ENCODE measurements at regions of chr1 and their contacts with region 1.

Region 1: DNA sequence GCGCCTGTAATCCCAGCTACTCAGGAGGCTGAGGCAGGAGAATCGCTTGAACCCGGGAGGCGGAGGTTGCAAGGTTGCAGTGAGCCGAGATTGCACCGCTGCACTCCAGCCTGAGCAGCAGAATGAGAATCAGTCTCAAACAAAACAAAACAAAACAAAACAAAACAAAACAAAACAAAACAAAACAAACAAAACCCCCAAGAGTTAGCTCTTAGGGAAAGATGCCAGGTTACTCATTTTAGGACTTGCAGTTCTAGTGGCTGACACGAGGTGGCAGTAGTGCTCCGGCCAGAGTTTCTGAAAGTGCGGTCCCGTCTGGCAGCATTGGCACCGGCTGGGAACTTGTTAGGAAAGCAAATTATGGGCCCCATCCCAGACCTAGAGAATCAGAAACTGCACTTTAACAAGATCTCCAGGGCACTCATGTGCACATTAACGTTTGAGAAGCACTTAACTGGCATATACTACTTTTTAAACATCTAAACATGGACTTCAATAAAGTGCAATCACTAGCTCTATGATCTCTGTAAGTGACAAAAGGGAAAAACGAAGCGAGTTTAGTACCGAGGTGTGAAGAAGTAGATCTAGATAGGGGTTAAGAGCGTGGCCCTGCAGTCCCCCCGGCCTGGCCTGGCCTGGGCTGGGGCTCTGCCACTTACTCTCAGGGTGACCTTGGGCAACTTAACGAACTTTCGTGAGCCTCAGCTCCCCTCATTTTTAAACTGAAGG is 41.9 kb upstream of the TNFRSF1B start:
- DNase-seq: peak; percentile 60 to 88 (median 76)
- ATAC-seq: peak; percentile 75
- H3K4me3 ChIP-seq: no peak overlapping the region
- H3K4me3 Mint-ChIP-seq: peak overlapping the region; percentile 71
- H3K27ac ChIP-seq: no peak overlapping the region
- H3K27ac Mint-ChIP-seq: peak overlapping the region; percentile 24
- H3K4me1 ChIP-seq: peaks cover 50% of the 10 kb centered on the region
- H3K4me1 Mint-ChIP-seq: peaks cover 45% of the 10 kb centered on the region
- H3K27me3 ChIP-seq: no peaks in the 10 kb centered on the region
- H3K27me3 Mint-ChIP-seq: no peaks in the 10 kb centered on the region
- CTCF ChIP-seq: peak; percentile 97

Region 2: DNA sequence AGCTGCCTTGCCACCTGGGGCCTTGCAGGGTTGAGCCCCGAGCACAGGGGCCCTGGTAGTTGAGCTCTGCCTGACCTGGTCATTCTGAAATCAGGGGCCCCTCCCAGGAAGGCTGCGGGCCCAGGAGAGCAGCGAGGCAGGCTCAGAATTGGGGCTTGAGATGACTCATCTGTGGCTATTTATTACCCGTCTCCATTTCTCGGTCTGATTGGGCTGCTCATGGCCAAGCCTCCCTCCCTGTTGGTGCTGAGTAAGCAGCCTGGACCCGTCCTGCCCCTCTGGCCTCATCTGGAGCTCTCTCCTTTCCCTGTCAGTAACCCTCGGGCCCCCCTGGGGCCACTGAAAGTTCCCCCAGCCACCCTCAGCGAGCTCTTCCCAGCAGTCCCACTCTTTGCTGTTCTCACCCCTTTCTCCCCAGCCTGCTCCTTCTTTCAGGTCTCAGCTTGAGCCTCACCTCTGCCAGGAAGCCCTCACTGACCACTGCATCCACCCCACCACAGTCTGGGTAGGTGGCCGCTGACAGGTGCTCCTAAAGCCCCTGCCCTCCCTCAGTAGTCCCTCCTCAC is 72.8 kb before region 1 on chr1:
- CTCF ChIA-PET with region 1: no interaction called
- POLR2A ChIA-PET with region 1: no interaction called
- intact Hi-C with region 1: no loop called
- DNase-seq: peak in 4 of 14 experiments; percentile 17 to 50 (median 30)
- ATAC-seq: no peak
- H3K4me3 ChIP-seq: no peak overlapping the region
- H3K4me3 Mint-ChIP-seq: no peak overlapping the region
- H3K27ac ChIP-seq: no peak overlapping the region
- H3K27ac Mint-ChIP-seq: no peak overlapping the region
- H3K4me1 ChIP-seq: peaks cover 17% of the 10 kb centered on the region
- H3K4me1 Mint-ChIP-seq: no peaks in the 10 kb centered on the region
- H3K27me3 ChIP-seq: no peaks in the 10 kb centered on the region
- H3K27me3 Mint-ChIP-seq: no peaks in the 10 kb centered on the region
- CTCF ChIP-seq: no peak

Region 3: DNA sequence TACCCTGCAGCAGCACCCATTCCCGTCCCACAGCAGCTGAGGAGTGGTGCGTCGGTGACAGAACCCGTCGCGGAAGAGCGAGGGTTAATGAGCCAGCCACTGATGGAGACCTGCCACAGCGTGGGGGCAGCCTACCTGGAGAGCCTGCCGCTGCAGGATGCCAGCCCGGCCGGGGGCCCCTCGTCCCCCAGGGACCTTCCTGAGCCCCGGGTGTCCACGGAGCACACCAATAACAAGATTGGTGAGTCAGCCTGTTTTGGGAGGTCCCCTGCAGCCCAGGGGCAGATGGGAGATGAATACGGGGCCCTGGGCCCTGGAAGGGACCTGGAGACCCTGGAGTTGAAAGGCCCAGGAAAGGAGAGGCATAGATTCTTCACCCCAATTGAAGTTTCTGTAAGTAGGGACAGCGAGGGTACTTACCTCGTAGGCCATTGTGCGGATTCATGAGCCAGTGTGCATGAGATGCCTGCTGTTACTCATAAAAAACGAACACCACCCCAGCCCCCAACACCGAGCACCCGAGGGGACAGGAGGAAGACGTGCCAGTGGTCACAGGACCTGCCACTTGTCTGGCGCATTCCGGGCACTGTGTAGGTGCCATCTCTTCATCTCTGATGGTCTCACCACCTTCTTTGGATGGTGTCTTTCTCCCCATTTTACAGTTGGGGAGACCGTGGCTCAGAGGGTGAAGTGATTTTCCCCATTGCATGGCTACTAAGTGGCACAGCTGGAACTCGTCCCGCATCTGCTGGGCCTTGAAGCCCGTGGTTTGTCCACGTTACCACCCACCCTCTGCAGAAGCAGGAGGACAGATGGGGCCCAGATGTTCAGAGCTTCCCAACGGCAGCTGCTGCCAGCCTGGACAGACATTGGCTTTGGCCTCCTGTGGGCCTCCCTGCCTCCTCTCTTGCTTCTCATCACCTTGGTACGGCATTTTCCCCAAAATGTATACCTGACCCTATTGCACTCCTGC is 13.6 kb after region 1 on chr1:
- CTCF ChIA-PET with region 1: interaction called, 10 read pairs
- POLR2A ChIA-PET with region 1: interaction called, 3 read pairs
- intact Hi-C with region 1: no loop called
- DNase-seq: no peak
- ATAC-seq: no peak
- H3K4me3 ChIP-seq: no peak overlapping the region
- H3K4me3 Mint-ChIP-seq: no peak overlapping the region
- H3K27ac ChIP-seq: no peak overlapping the region
- H3K27ac Mint-ChIP-seq: no peak overlapping the region
- H3K4me1 ChIP-seq: peaks cover 34% of the 10 kb centered on the region
- H3K4me1 Mint-ChIP-seq: peaks cover 16% of the 10 kb centered on the region
- H3K27me3 ChIP-seq: no peaks in the 10 kb centered on the region
- H3K27me3 Mint-ChIP-seq: no peaks in the 10 kb centered on the region
- CTCF ChIP-seq: no peak

Region 4: GRCh38 chr1:12161662-12162458 is 37.0 kb after region 1 on chr1:
- CTCF ChIA-PET with region 1: interaction called, 16 read pairs
- POLR2A ChIA-PET with region 1: interaction called, 6 read pairs
- intact Hi-C with region 1: no loop called
- DNase-seq: peak; percentile 43 to 93 (median 64)
- ATAC-seq: peak; percentile 75
- H3K4me3 ChIP-seq: no peak overlapping the region
- H3K4me3 Mint-ChIP-seq: peak overlapping the region; percentile 59
- H3K27ac ChIP-seq: peak overlapping the region; percentile 47 to 73
- H3K27ac Mint-ChIP-seq: peak overlapping the region; percentile 83
- H3K4me1 ChIP-seq: peaks cover 94% of the 10 kb centered on the region
- H3K4me1 Mint-ChIP-seq: peaks cover 69% of the 10 kb centered on the region
- H3K27me3 ChIP-seq: no peaks in the 10 kb centered on the region
- H3K27me3 Mint-ChIP-seq: no peaks in the 10 kb centered on the region
- CTCF ChIP-seq: no peak

Region 5: GRCh38 chr1:12177999-12178441 is 53.2 kb after region 1 on chr1:
- CTCF ChIA-PET with region 1: interaction called, 67 read pairs
- POLR2A ChIA-PET with region 1: interaction called, 26 read pairs
- intact Hi-C with region 1: no loop called
- DNase-seq: peak; percentile 77 to 99 (median 94)
- ATAC-seq: peak; percentile 70
- H3K4me3 ChIP-seq: peak overlapping the region; percentile 41
- H3K4me3 Mint-ChIP-seq: peak overlapping the region; percentile 69
- H3K27ac ChIP-seq: peak overlapping the region; percentile 83 to 85
- H3K27ac Mint-ChIP-seq: peak overlapping the region; percentile 96
- H3K4me1 ChIP-seq: peaks cover 100% of the 10 kb centered on the region
- H3K4me1 Mint-ChIP-seq: peaks cover 77% of the 10 kb centered on the region
- H3K27me3 ChIP-seq: no peaks in the 10 kb centered on the region
- H3K27me3 Mint-ChIP-seq: no peaks in the 10 kb centered on the region
- CTCF ChIP-seq: no peak

Region 6: DNA sequence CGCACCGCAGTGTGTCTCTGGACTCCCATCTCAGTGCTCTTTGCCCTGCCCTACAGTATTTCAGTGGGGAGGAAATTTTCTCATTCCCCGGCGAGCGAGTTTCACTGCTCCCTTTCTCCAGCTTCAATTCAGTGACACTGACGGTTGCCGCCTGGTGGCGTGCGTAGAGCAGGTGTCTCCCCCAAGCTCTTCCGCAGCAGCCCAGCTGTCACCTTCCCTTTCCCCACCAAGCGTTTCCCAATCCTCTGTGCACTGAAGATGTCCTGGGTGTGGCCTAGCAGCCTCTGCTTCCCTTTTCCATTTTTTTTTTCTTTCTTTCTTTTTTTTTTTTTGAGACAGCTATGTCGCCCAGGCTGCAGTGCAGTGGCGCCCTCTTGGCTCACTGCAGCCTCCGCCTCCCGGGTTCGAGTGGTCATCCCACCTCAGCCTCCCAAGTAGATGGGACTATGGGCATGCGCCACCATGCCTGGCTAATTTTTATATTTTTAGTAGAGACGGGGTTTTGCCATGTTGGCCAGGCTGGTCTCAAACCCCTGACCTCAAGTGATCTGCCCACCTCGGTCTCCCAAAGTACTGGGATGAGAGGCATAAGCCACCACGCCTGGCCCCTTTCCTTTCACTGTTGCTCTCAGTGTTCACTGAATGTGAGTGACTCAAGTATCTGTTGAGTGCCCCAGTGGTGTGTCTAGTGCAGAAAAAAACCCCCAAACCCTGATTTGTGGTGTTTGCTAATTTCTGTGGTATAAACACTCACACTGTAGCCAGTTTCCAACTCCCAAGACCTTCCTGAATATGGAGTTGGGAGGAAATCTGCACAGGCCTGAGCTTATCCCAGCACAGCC is 72.0 kb after region 1 on chr1:
- CTCF ChIA-PET with region 1: interaction called, 42 read pairs
- POLR2A ChIA-PET with region 1: interaction called, 5 read pairs
- intact Hi-C with region 1: no loop called
- DNase-seq: peak in 2 of 14 experiments; percentile 63 to 69
- ATAC-seq: no peak
- H3K4me3 ChIP-seq: no peak overlapping the region
- H3K4me3 Mint-ChIP-seq: no peak overlapping the region
- H3K27ac ChIP-seq: no peak overlapping the region
- H3K27ac Mint-ChIP-seq: no peak overlapping the region
- H3K4me1 ChIP-seq: peaks cover 44% of the 10 kb centered on the region
- H3K4me1 Mint-ChIP-seq: no peaks in the 10 kb centered on the region
- H3K27me3 ChIP-seq: no peaks in the 10 kb centered on the region
- H3K27me3 Mint-ChIP-seq: no peaks in the 10 kb centered on the region
- CTCF ChIP-seq: no peak

Region 7: DNA sequence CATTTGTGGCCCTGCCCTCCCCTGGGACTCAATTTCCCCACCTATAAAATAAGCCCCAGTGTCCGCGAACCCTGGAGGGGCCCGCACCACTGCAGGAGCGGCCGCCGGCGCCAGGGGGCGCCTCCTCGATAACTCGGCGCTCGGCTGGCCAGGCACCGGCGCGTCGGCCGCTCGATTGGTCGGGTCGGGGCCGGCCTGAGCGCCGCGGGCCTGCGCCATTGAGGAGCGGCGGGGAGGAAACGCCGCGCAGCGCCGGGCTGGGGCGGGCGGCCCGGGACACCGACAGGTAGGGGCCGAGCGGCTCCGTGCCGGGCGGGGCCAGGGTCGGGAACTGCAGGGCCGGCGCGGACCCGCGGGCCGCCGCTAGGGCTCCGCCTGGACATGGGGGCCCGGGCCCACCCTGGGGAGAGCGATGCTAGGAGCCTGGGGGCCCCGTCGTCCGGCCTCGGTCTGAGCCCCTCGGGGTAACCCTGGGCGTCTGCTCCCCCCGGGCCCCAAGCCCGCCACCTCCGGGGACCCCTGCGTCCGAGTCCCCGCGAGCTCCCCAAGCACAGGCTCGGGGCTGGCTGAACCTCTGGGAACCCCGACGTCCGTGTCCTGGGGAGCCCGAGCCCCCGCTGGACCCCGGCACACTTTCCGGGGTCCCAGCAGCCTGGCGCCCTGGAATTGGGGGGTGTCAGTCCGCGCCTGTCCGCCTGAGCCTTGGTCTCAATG is 105.1 kb after region 1 on chr1 and contains the start of gene VPS13D:
- CTCF ChIA-PET with region 1: interaction called, 16 read pairs
- POLR2A ChIA-PET with region 1: interaction called, 4 read pairs
- intact Hi-C with region 1: no loop called
- DNase-seq: peak; percentile 74 to 93 (median 82)
- ATAC-seq: peak; percentile 95
- H3K4me3 ChIP-seq: peak within 1 kb of the TSS; percentile 98
- H3K4me3 Mint-ChIP-seq: peak within 1 kb of the TSS; percentile 94
- H3K27ac ChIP-seq: peak within 1 kb of the TSS in 1 of 2 donors; percentile 50
- H3K27ac Mint-ChIP-seq: peak within 1 kb of the TSS; percentile 83
- H3K4me1 ChIP-seq: peaks cover 24% of the 10 kb centered on the region
- H3K4me1 Mint-ChIP-seq: peaks cover 27% of the 10 kb centered on the region
- H3K27me3 ChIP-seq: no peaks in the 10 kb centered on the region
- H3K27me3 Mint-ChIP-seq: no peaks in the 10 kb centered on the region
- CTCF ChIP-seq: peak; percentile 85
- total RNA-seq, gene VPS13D: 63.0 to 67.3 TPM

Measured in CD4-positive, alpha-beta T cell (primary cell).